ENCODE measurements at regions of chr15 and their contacts with region 1.

Region 1: GRCh38 chr15:74730619-74731316 is 5.4 kb upstream of the CYP1A1 start:
- DNase-seq: peak; percentile 29
- H3K4me3 ChIP-seq: no peak overlapping the region
- H3K27ac ChIP-seq: no peak overlapping the region
- H3K4me1 ChIP-seq: peaks cover 0 to 21% (median 13%) of the 10 kb centered on the region in 4 donors
- H3K27me3 ChIP-seq: peaks cover 4 to 57% (median 23%) of the 10 kb centered on the region in 3 donors
- CTCF ChIP-seq: no peak
- EP300 ChIP-seq: no peak
- POLR2A ChIP-seq: no peak

Region 2: GRCh38 chr15:74768771-74769342 is 38.1 kb after region 1 on chr15:
- intact Hi-C with region 1: no loop called
- DNase-seq: no peak
- H3K4me3 ChIP-seq: peak overlapping the region in 1 of 4 donors; percentile 5
- H3K27ac ChIP-seq: no peak overlapping the region
- H3K4me1 ChIP-seq: peaks cover 0 to 6% (median 3%) of the 10 kb centered on the region in 4 donors
- H3K27me3 ChIP-seq: peaks cover 0 to 16% (median 0%) of the 10 kb centered on the region in 3 donors
- CTCF ChIP-seq: peak; percentile 71 to 86 (median 86)
- EP300 ChIP-seq: no peak
- POLR2A ChIP-seq: no peak

Region 3: DNA sequence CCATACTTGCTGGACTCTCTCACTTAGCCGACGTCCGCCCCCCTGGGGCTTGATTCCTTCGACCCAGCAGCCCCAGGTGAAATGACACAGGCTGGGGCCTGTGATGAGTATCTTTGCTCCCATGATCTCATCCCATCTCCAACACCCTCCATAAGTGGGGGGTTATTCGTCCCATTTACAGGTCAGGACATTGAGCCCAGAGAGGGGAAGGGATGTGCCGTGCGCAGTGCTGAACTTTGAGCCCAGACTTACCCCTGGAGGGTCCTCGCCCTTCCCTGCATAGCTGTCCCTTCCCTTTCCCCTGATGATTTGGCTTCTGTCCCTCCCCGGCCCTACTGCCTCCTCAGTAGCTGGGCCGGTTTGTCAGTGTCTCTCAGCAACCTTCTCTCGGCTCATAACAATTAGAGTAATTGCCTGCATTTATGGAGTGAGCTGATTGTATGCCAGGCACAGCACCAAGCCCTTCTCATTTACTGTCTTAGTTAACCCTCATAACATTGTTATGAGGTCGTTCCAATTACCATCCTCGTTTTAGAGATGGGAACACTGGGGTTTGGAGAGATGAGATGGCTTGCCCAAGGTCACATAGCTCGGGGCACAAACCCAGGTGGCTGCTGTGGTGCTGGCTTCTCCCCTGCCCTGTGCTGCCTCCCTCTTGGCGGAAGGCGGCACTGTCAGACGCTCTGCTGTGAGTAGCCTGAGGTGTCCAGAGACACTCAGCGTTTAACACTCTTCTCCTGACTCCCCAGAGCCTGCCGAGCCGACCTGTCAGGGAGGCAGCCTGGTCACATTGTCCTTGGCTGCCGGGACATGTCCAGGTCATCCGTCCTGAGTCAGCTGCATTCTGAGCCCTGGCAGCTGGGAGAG is 86.3 kb after region 1 on chr15:
- intact Hi-C with region 1: no loop called
- DNase-seq: no peak
- H3K4me3 ChIP-seq: no peak overlapping the region
- H3K27ac ChIP-seq: peak overlapping the region in 3 of 4 donors; percentile 35 to 61 (median 59)
- H3K4me1 ChIP-seq: peaks cover 0 to 29% (median 19%) of the 10 kb centered on the region in 4 donors
- H3K27me3 ChIP-seq: no peaks in the 10 kb centered on the region
- CTCF ChIP-seq: peak in 1 of 4 experiments; percentile 20
- EP300 ChIP-seq: no peak
- POLR2A ChIP-seq: no peak

Region 4: DNA sequence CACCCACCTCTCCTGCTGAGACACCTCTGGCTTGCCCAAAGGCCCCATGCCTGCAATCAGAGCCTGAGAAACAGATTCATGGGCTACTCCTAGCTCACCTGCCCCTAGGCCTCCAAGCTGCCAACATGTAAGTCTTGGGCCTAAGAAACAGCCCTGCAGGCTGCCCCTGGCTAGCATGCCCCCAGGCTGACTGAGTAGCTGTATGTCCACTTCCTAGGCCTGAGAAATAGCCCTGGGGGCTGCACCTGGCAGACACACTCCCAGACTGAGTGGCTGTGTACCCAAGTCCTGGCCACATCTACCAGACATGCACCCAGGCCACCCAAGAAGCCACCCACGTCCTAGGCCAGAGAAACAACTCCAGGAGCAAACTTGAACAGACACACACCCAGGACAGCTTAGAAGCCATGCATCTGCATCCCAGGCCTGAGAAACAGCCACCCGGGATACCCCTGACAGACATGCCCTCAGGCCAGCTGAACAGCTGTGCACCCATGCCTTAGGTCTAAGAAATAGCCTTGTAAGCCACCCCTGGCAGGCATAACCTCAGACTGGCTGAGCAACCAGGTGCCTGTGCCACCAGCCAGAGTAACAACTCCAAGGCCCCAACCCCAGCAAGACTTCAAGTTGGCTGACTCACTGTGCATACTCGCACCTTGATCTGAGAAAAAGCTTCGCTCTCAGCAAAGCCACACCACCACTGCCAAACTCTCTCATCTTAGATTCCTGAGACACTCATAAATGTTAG is 1293.4 kb after region 1 on chr15:
- intact Hi-C with region 1: loop called (anchors 10 kb)
- DNase-seq: no peak
- H3K4me3 ChIP-seq: no peak overlapping the region
- H3K27ac ChIP-seq: no peak overlapping the region
- H3K4me1 ChIP-seq: no peaks in the 10 kb centered on the region
- H3K27me3 ChIP-seq: peaks cover 0 to under 1% (median 0%) of the 10 kb centered on the region in 3 donors
- CTCF ChIP-seq: no peak
- EP300 ChIP-seq: no peak
- POLR2A ChIP-seq: no peak

Measured in sigmoid colon (tissue), 7 donors.